ENCODE measurements at regions of chr1 and their contacts with region 1.

Region 1: GRCh38 chr1:7667625-7668218 is 103.4 kb upstream of the VAMP3 start:
- DNase-seq: peak; percentile 75 to 96 (median 88)
- ATAC-seq: peak; percentile 96
- H3K4me3 ChIP-seq: no peak overlapping the region
- H3K27ac ChIP-seq: no peak overlapping the region
- H3K4me1 ChIP-seq: peaks cover 0 to 13% of the 10 kb centered on the region in 2 donors
- H3K27me3 ChIP-seq: peaks cover 0 to 12% of the 10 kb centered on the region in 2 donors
- CTCF ChIP-seq: peak; percentile 98 to 100

Region 2: GRCh38 chr1:7752512-7753417 is 85.0 kb after region 1 on chr1:
- intact Hi-C with region 1: loop called in 1 of 2 experiments (anchors 5 kb)
- DNase-seq: peak in 3 of 4 donors; percentile 38 to 85 (median 77)
- ATAC-seq: peak; percentile 96
- H3K4me3 ChIP-seq: no peak overlapping the region
- H3K27ac ChIP-seq: peak overlapping the region in 1 of 2 donors; percentile 34
- H3K4me1 ChIP-seq: peaks cover 0 to 21% of the 10 kb centered on the region in 2 donors
- H3K27me3 ChIP-seq: no peaks in the 10 kb centered on the region
- CTCF ChIP-seq: peak; percentile 60 to 71

Region 3: DNA sequence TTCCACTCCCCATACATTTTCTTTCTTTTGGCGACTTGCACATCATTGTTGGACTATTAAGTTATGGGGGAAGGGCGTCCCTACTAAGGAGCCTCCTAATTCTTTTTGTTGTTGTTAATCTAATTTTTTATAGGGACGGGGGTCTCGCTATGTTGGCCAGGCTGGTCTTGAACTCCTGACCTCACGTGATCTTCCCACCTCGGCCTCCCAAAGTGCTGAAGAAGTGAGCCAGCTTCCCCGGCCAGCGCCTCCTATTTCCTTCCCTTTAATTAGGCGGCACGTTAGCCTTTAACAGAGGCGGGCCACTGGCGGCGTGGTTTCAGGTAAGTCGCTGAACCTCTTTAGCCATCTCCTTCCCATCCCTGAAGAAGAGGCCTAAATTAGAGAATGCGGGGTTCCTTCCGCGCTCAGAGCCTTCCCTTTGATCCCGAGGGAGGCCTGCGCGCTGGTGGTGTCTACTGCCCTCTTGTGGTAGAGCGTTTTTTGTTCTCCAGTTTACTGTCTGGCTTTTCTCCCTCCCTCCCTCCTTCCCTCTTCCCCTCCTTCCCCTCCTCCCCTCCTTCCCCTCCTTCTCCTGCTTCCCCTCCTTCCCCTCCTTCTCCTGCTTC is 234.9 kb after region 1 on chr1:
- intact Hi-C with region 1: loop called in 1 of 2 experiments (anchors 5 kb)
- DNase-seq: peak; percentile 53 to 85 (median 81)
- ATAC-seq: peak; percentile 98
- H3K4me3 ChIP-seq: no peak overlapping the region
- H3K27ac ChIP-seq: no peak overlapping the region
- H3K4me1 ChIP-seq: peaks cover 0 to 3% of the 10 kb centered on the region in 2 donors
- H3K27me3 ChIP-seq: no peaks in the 10 kb centered on the region
- CTCF ChIP-seq: peak; percentile 49 to 50

Measured in left lung (tissue), 14 donors.